B cell (primary cell): ENCODE measurements at regions of chr2 and their contacts with region 1.

Region 1: DNA sequence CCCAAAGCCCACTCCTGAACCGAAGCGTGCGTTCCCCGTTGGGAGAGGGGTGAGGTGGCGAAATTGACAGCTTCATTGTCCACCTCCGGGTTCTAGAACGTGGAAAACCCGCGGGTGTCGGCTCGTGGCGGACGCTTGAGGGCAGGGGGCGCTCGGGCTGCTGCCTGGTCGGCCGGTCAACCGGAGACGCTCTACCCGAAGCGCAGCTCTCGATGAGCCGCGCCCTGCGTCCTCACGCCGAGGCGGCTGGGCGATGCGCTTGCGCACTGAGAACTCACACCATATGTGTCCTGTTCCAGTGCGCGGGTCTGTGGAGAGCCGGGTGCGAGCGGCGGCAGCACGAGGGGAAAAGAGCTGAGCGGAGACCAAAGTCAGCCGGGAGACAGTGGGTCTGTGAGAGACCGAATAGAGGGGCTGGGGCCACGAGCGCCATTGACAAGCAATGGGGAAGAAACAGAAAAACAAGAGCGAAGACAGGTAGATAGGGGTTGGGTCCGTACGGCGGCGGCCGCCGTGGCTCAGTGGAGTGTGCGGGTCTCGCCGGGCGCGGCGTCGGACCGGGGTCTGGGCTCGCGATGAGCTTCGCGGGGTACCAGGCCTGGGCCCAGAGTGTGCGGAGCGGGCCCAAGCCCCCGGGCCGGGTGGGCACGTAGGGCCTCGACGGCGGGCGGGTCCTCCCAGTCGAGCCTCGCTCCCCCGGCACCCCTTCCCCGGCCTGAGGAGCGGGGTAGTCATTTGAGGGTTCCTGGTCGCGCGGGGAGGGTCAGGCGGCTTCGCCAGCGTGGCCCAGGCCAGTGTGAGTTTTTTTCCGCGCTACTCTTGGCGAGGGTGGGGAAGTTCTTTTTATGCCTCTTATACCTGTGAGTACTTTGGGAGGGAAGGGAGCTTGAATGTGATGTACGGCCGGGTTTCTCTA is at the start of gene EIF5B:
- DNase-seq: peak; percentile 96
- ATAC-seq: peak; percentile 63
- H3K4me3 ChIP-seq: peak within 1 kb of the TSS; percentile 78 to 95 (median 87)
- H3K4me3 Mint-ChIP-seq: no peak within 1 kb of the TSS
- H3K27ac ChIP-seq: peak within 1 kb of the TSS; percentile 90 to 93
- H3K27ac Mint-ChIP-seq: no peak within 1 kb of the TSS
- H3K4me1 ChIP-seq: peaks cover 14 to 31% of the 10 kb centered on the region in 2 donors
- H3K4me1 Mint-ChIP-seq: peaks cover 29% of the 10 kb centered on the region
- H3K27me3 ChIP-seq: no peaks in the 10 kb centered on the region
- H3K27me3 Mint-ChIP-seq: no peaks in the 10 kb centered on the region
- CTCF ChIP-seq: peak; percentile 70
- total RNA-seq, gene EIF5B: 32.8 and 33.0 TPM in 2 replicates

Region 2: DNA sequence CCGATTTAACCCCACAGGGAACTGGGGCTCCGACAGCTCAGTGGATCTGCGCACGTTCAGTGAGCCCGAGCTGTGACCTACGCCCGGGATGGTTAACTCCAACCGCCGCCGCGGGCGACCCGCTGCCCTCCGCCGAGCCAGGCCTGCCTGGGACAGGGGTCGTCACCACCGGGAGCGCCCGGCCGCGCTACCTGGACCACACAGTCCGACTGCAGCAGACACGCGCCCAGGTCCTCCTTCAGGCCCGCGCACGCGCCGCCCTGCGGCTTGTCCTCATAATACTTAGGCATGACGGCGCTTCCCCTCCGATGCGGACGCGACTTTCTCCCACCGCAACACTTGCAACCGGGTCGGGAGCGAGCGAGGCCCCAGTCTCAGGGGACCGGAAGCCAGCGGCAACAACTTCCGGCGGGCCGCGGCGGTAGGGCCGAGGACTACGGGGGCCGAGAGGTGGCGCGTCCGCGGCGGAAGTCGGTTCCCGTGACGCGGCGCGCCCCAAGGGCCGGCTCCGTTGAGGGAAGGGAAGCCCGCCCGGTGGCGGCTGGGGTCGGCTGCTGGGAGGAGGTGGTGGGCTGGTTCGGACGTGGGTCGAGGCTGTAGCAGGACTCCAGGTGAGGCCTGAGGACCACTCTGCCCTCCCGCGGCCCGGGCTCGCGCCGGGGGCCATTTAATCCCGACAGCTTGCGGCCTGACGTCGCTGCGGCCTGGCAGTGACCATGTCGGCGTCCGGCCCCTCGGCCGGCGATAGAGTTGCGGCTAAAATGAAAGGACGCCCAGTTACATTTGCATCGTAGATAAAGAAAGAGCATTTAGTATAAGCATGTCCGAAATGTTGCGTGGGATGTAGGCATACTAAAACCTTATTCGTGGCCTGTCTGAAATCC is 729.0 kb before region 1 on chr2 and contains the starts of genes COA5 and UNC50:
- CTCF ChIA-PET with region 1: no interaction called
- POLR2A ChIA-PET with region 1: no interaction called
- intact Hi-C with region 1: loop called (anchors 5 kb)
- DNase-seq: peak; percentile 94
- ATAC-seq: peak; percentile 92
- H3K4me3 ChIP-seq: peak within 1 kb of the TSS; percentile 88 to 99 (median 97)
- H3K4me3 Mint-ChIP-seq: peak within 1 kb of the TSS; percentile 93
- H3K27ac ChIP-seq: peak within 1 kb of the TSS; percentile 86 to 97
- H3K27ac Mint-ChIP-seq: peak within 1 kb of the TSS; percentile 94
- H3K4me1 ChIP-seq: peaks cover 33 to 35% of the 10 kb centered on the region in 2 donors
- H3K4me1 Mint-ChIP-seq: peaks cover 67% of the 10 kb centered on the region
- H3K27me3 ChIP-seq: no peaks in the 10 kb centered on the region
- H3K27me3 Mint-ChIP-seq: no peaks in the 10 kb centered on the region
- CTCF ChIP-seq: no peak
- total RNA-seq, gene COA5: 46.9 and 48.9 TPM in 2 replicates
- total RNA-seq, gene UNC50: 38.8 and 45.5 TPM in 2 replicates

Region 3: GRCh38 chr2:98985905-98986666 is 351.3 kb before region 1 on chr2:
- CTCF ChIA-PET with region 1: no interaction called
- POLR2A ChIA-PET with region 1: no interaction called
- intact Hi-C with region 1: no loop called
- DNase-seq: no peak
- ATAC-seq: no peak
- H3K4me3 ChIP-seq: no peak overlapping the region
- H3K4me3 Mint-ChIP-seq: no peak overlapping the region
- H3K27ac ChIP-seq: no peak overlapping the region
- H3K27ac Mint-ChIP-seq: no peak overlapping the region
- H3K4me1 ChIP-seq: no peaks in the 10 kb centered on the region
- H3K4me1 Mint-ChIP-seq: no peaks in the 10 kb centered on the region
- H3K27me3 ChIP-seq: no peaks in the 10 kb centered on the region
- H3K27me3 Mint-ChIP-seq: no peaks in the 10 kb centered on the region
- CTCF ChIP-seq: no peak

Region 4: DNA sequence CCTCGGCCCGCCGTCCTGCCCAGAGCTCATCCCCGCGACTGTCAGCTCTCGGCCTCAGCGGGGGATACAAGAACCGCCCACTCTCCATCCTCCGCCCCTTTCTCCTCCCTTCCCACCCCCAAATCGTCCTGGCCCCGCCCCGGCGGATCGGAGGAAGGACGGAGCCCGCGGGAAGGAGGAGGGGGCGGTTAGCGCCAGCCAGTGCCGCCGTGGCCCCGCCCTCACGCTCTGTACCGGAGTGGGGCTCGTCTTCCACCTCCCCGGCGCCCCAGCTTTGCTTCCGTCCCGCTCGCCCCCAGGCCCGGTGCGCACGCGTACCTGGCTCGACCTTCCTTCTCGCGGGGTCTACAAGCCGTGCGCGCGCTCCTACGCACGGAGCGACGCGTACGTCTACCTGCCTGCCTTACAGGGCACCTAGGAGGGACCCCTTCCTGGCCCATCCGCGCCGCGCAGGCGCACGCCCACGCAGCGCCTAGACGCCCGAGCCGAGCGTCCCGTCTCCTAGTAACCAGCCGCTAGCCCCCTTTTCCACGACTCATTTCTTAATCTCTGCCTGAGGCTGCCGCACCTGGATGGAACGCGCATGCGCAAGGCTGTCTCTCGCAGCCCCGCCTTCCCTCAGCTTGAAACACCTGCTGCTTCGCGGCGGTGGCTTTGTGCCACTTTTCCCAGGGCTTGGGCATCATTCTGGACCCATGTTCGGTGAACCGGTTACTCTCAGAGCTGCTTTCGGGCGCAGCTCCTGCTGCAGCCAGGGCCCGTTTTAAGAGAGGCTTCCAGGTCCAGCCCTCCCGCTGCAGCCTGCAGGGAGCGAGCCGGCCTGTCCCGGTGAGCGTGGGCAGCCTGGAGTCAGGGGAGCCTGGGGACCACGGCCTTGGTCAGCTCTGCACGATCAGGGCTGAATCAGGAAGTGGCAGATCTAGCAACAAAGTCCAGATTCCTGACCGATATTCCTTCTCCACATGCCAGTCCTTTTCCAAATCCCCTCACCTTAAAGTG is 196.0 kb before region 1 on chr2 and contains the start of gene C2orf15:
- CTCF ChIA-PET with region 1: interaction called, 4 read pairs
- POLR2A ChIA-PET with region 1: interaction called, 7 read pairs
- intact Hi-C with region 1: loop called (anchors 1 kb)
- DNase-seq: peak; percentile 98
- ATAC-seq: peak; percentile 90
- H3K4me3 ChIP-seq: peak within 1 kb of the TSS; percentile 76 to 90 (median 87)
- H3K4me3 Mint-ChIP-seq: peak within 1 kb of the TSS; percentile 97
- H3K27ac ChIP-seq: peak within 1 kb of the TSS; percentile 93
- H3K27ac Mint-ChIP-seq: peak within 1 kb of the TSS; percentile 97
- H3K4me1 ChIP-seq: peaks cover 12 to 13% of the 10 kb centered on the region in 2 donors
- H3K4me1 Mint-ChIP-seq: peaks cover 25% of the 10 kb centered on the region
- H3K27me3 ChIP-seq: no peaks in the 10 kb centered on the region
- H3K27me3 Mint-ChIP-seq: no peaks in the 10 kb centered on the region
- CTCF ChIP-seq: no peak
- total RNA-seq, gene C2orf15: 1.0 and 1.2 TPM in 2 replicates

Region 5: GRCh38 chr2:99154643-99155536 is 182.5 kb before region 1 on chr2 and contains the starts of genes LIPT1 and TSGA10:
- CTCF ChIA-PET with region 1: interaction called, 9 read pairs
- POLR2A ChIA-PET with region 1: interaction called, 5 read pairs
- intact Hi-C with region 1: loop called (anchors 1 kb)
- DNase-seq: peak; percentile 97
- ATAC-seq: peak; percentile 90
- H3K4me3 ChIP-seq: peak within 1 kb of the TSS; percentile 86 to 98 (median 94)
- H3K4me3 Mint-ChIP-seq: no peak within 1 kb of the TSS
- H3K27ac ChIP-seq: peak within 1 kb of the TSS; percentile 91 to 99
- H3K27ac Mint-ChIP-seq: peak within 1 kb of the TSS; percentile 91
- H3K4me1 ChIP-seq: peaks cover 27 to 29% of the 10 kb centered on the region in 2 donors
- H3K4me1 Mint-ChIP-seq: peaks cover 47% of the 10 kb centered on the region
- H3K27me3 ChIP-seq: no peaks in the 10 kb centered on the region
- H3K27me3 Mint-ChIP-seq: no peaks in the 10 kb centered on the region
- CTCF ChIP-seq: no peak
- total RNA-seq, gene LIPT1: 24.3 and 26.2 TPM in 2 replicates
- total RNA-seq, gene TSGA10: 36.9 and 39.6 TPM in 2 replicates

Region 6: DNA sequence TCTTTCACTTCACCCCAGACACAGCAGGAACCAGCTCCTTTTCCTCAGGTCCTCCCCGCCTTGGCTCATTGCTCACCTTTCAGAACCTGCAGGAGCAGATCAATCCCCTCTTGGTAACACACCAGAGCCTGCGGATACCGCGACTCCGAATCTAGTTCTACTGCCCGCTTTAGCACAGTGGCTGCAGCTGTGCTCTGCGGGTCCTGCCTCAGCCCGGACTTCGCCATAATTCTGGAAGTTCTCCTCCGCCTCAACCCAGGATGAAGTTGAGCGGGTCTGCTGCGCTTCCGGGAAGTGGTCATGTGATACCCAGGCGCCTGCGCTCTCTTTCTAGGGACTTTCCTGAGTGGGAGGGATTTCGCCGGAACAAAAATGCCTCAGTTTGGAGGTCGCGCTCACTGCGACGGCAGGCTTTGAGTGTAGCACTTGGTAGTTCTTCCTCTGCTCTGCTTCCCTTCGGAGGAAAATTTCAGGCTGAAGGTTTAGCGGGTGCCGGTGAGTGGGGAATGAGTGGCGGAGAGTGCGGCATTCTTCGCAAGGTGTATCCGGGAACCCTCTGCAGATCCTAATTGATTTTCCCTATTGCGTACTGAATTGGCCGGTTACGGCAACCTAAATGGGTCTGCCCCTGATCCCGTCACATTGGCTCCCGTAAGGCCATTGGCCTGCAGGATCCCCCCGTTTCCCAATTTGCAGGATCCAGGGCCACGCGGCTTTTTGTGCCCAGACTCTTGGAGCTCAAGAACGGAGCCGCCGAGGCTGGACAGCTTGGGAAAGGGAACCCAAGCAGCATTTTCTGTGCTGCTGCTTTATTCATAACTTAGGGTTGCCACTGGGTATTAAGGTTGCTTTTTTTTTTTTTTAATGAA is 156.4 kb before region 1 on chr2 and contains the starts of genes MITD1 and MRPL30:
- CTCF ChIA-PET with region 1: interaction called, 7 read pairs
- POLR2A ChIA-PET with region 1: interaction called, 6 read pairs
- intact Hi-C with region 1: loop called (anchors 1 kb)
- DNase-seq: peak; percentile 96
- ATAC-seq: peak; percentile 96
- H3K4me3 ChIP-seq: peak within 1 kb of the TSS; percentile 93 to 100 (median 97)
- H3K4me3 Mint-ChIP-seq: peak within 1 kb of the TSS; percentile 99
- H3K27ac ChIP-seq: peak within 1 kb of the TSS; percentile 92 to 95
- H3K27ac Mint-ChIP-seq: peak within 1 kb of the TSS; percentile 99
- H3K4me1 ChIP-seq: peaks cover 25 to 26% of the 10 kb centered on the region in 2 donors
- H3K4me1 Mint-ChIP-seq: peaks cover 49% of the 10 kb centered on the region
- H3K27me3 ChIP-seq: no peaks in the 10 kb centered on the region
- H3K27me3 Mint-ChIP-seq: no peaks in the 10 kb centered on the region
- CTCF ChIP-seq: no peak
- total RNA-seq, gene MITD1: 71.6 and 73.0 TPM in 2 replicates
- total RNA-seq, gene MRPL30: 18.5 and 21.9 TPM in 2 replicates

Region 7: GRCh38 chr2:99489761-99490622 is 152.6 kb after region 1 on chr2 and contains the start of gene REV1:
- CTCF ChIA-PET with region 1: interaction called, 14 read pairs
- POLR2A ChIA-PET with region 1: interaction called, 7 read pairs
- intact Hi-C with region 1: loop called (anchors 1 kb)
- DNase-seq: peak; percentile 99
- ATAC-seq: peak; percentile 85
- H3K4me3 ChIP-seq: peak within 1 kb of the TSS; percentile 58 to 81 (median 80)
- H3K4me3 Mint-ChIP-seq: peak within 1 kb of the TSS; percentile 99
- H3K27ac ChIP-seq: peak within 1 kb of the TSS; percentile 79 to 80
- H3K27ac Mint-ChIP-seq: peak within 1 kb of the TSS; percentile 99
- H3K4me1 ChIP-seq: peaks cover 10 to 27% of the 10 kb centered on the region in 2 donors
- H3K4me1 Mint-ChIP-seq: peaks cover 29% of the 10 kb centered on the region
- H3K27me3 ChIP-seq: no peaks in the 10 kb centered on the region
- H3K27me3 Mint-ChIP-seq: peaks cover 12% of the 10 kb centered on the region
- CTCF ChIP-seq: peak; percentile 83
- total RNA-seq, gene REV1: 69.5 and 70.5 TPM in 2 replicates